Aorta (tissue), 5 donors: ENCODE measurements at regions of chr4 and their contacts with region 1.

Region 1: GRCh38 chr4:15457406-15458201 is 12.1 kb upstream of the CC2D2A start:
- DNase-seq: no peak
- ATAC-seq: peak; percentile 77
- H3K4me3 ChIP-seq: no peak overlapping the region
- H3K27ac ChIP-seq: peak overlapping the region; percentile 57 to 71
- H3K4me1 ChIP-seq: peaks cover 6 to 28% of the 10 kb centered on the region in 2 donors
- H3K27me3 ChIP-seq: no peaks in the 10 kb centered on the region

Region 2: GRCh38 chr4:15020502-15021286 is 436.9 kb before region 1 on chr4:
- intact Hi-C with region 1: loop called in 1 of 2 experiments (anchors 10 kb)
- DNase-seq: no peak
- ATAC-seq: peak; percentile 59
- H3K4me3 ChIP-seq: no peak overlapping the region
- H3K27ac ChIP-seq: peak overlapping the region in 1 of 2 donors; percentile 43
- H3K4me1 ChIP-seq: peaks cover 0 to 11% of the 10 kb centered on the region in 2 donors
- H3K27me3 ChIP-seq: no peaks in the 10 kb centered on the region

Region 3: GRCh38 chr4:15132739-15133138 is 324.9 kb before region 1 on chr4:
- intact Hi-C with region 1: no loop called
- DNase-seq: no peak
- ATAC-seq: no peak
- H3K4me3 ChIP-seq: no peak overlapping the region
- H3K27ac ChIP-seq: no peak overlapping the region
- H3K4me1 ChIP-seq: peaks cover 0 to 3% of the 10 kb centered on the region in 2 donors
- H3K27me3 ChIP-seq: no peaks in the 10 kb centered on the region

Region 4: GRCh38 chr4:15327311-15328298 is 130.0 kb before region 1 on chr4:
- intact Hi-C with region 1: loop called in 1 of 2 experiments (anchors 10 kb)
- DNase-seq: no peak
- ATAC-seq: no peak
- H3K4me3 ChIP-seq: no peak overlapping the region
- H3K27ac ChIP-seq: peak overlapping the region in 1 of 2 donors; percentile 1
- H3K4me1 ChIP-seq: peaks cover 0 to 8% of the 10 kb centered on the region in 2 donors
- H3K27me3 ChIP-seq: no peaks in the 10 kb centered on the region

Region 5: GRCh38 chr4:15396157-15396800 is 61.3 kb before region 1 on chr4:
- intact Hi-C with region 1: loop called (anchors 5 kb)
- DNase-seq: no peak
- ATAC-seq: no peak
- H3K4me3 ChIP-seq: no peak overlapping the region
- H3K27ac ChIP-seq: no peak overlapping the region
- H3K4me1 ChIP-seq: peaks cover 14 to 28% of the 10 kb centered on the region in 2 donors
- H3K27me3 ChIP-seq: no peaks in the 10 kb centered on the region